HepG2 (cell line): ENCODE measurements at regions of chr22 and their contacts with region 1.

Region 1: DNA sequence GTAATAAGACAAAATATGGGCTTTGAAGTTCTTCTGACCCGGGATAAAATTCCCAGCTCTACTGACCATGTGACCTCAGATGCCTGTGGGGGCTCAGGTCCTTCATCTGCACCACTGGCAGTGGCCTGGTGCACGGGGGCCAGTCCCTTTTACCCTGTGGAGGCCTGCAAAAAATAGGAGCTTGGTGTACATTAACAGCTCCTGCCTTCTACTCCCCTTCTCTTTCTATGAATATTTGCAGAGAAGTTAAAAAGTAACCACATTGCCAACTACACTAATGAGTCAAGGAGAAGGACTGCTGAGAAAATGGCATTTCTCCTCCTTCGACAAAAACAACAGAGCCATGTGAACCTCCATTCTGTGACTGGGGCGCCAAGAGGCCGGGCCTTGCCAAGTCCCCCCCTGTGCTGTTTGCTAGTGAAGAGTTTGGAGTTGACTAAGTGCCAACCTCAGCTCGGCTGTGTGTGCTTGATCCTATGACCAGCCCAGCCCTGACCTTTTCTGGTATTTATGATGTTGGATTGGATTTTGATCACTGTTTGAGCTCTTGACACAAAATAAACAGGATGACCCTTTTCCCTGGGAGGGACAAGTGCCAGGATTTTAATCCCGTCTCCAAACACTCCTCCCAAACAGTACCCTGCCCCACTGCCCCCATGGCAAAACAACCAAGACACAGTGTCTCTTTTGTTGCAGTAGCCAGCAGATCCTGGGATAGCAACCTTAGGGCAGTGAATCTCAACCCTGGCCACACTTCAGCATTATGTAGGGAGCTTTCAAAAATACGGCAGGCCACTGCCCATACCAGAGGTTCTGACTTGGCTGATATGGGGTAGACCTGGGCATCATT is 380.1 kb downstream of the LARGE1 start:
- DNase-seq: peak; percentile 100
- ATAC-seq: peak; percentile 93
- H3K4me3 ChIP-seq: peak overlapping the region in 2 of 3 experiments; percentile 29 to 44; a peak in 2 of 6 replicates
- H3K27ac ChIP-seq: peak overlapping the region; percentile 99
- H3K4me1 ChIP-seq: peaks cover 86% of the 10 kb centered on the region
- H3K27me3 ChIP-seq: no peaks in the 10 kb centered on the region
- CTCF ChIP-seq: peak; percentile 1; the same call in 1 of the 2 replicates
- EP300 ChIP-seq: peak; percentile 97 to 99
- POLR2A ChIP-seq: peak in 1 of 2 experiments; percentile 78; a peak in 2 of 4 replicates
- RAD21 ChIP-seq: 0 out of 2 replicates have a peak, but pooled peaks have one; percentile 26

Region 2: GRCh38 chr22:33332538-33332937 is 207.6 kb before region 1 on chr22:
- CTCF ChIA-PET with region 1: no interaction called
- POLR2A ChIA-PET with region 1: interaction called, 27 read pairs
- in situ Hi-C with region 1: no loop called
- intact Hi-C with region 1: no loop called
- DNase-seq: no peak
- ATAC-seq: peak; percentile 15; the same call in 1 of the 3 replicates
- H3K4me3 ChIP-seq: no peak overlapping the region
- H3K27ac ChIP-seq: peak overlapping the region; percentile 37
- H3K4me1 ChIP-seq: peaks cover 82% of the 10 kb centered on the region
- H3K27me3 ChIP-seq: no peaks in the 10 kb centered on the region
- CTCF ChIP-seq: no peak
- EP300 ChIP-seq: no peak
- POLR2A ChIP-seq: no peak
- RAD21 ChIP-seq: no peak

Region 3: DNA sequence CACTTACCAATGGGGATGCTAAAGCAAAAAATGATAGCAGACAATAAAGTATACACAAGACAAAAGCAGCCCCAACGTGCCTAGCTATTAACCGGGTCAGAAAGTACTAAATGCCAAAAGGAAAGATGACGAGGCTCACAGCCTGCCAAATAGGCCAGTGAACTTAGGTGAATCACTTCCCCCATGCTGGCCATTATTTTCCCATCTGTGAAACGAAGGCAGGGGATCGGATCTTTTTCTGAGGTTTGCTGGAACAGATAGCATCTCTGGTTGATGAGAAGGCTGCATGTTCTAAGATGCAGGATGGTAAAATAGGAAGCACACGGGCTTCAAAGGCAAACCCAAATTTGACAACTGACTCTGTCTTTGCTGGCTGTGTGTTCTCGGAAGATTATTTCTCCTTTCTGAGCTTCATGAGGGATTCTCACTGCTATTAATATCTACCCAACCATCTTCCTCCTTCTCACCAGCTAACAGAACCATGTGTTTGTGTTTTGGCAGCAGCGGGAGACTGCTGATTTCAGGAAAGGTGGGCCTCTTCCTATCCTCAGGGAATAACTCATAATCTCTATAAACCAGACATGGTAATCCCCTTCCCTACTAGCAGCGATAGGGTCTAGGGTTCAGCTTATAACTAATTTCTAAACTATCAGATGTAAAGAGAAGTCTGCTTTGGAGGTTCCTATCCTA is 10.6 kb before region 1 on chr22:
- CTCF ChIA-PET with region 1: no interaction called
- POLR2A ChIA-PET with region 1: interaction called, 28 read pairs
- in situ Hi-C with region 1: no loop called
- intact Hi-C with region 1: no loop called
- DNase-seq: no peak
- ATAC-seq: no peak
- H3K4me3 ChIP-seq: no peak overlapping the region
- H3K27ac ChIP-seq: no peak overlapping the region
- H3K4me1 ChIP-seq: peaks cover 40% of the 10 kb centered on the region
- H3K27me3 ChIP-seq: no peaks in the 10 kb centered on the region
- CTCF ChIP-seq: no peak
- EP300 ChIP-seq: no peak
- POLR2A ChIP-seq: no peak
- RAD21 ChIP-seq: no peak

Region 4: GRCh38 chr22:33565580-33565995 is 25.5 kb after region 1 on chr22:
- CTCF ChIA-PET with region 1: no interaction called
- POLR2A ChIA-PET with region 1: interaction called, 35 read pairs
- in situ Hi-C with region 1: no loop called
- intact Hi-C with region 1: no loop called
- DNase-seq: no peak
- ATAC-seq: no peak
- H3K4me3 ChIP-seq: no peak overlapping the region
- H3K27ac ChIP-seq: no peak overlapping the region
- H3K4me1 ChIP-seq: peaks cover 69% of the 10 kb centered on the region
- H3K27me3 ChIP-seq: no peaks in the 10 kb centered on the region
- CTCF ChIP-seq: no peak
- EP300 ChIP-seq: no peak
- POLR2A ChIP-seq: no peak
- RAD21 ChIP-seq: no peak

Region 5: GRCh38 chr22:33579448-33580093 is 39.4 kb after region 1 on chr22:
- CTCF ChIA-PET with region 1: interaction called, 6 read pairs
- POLR2A ChIA-PET with region 1: interaction called, 91 read pairs
- in situ Hi-C with region 1: loop called (anchors 5 kb)
- intact Hi-C with region 1: loop called (anchors 1 kb)
- DNase-seq: peak; percentile 81
- ATAC-seq: peak; percentile 91
- H3K4me3 ChIP-seq: no peak overlapping the region
- H3K27ac ChIP-seq: peak overlapping the region; percentile 90
- H3K4me1 ChIP-seq: peaks cover 54% of the 10 kb centered on the region
- H3K27me3 ChIP-seq: no peaks in the 10 kb centered on the region
- CTCF ChIP-seq: peak; percentile 97
- EP300 ChIP-seq: no peak
- POLR2A ChIP-seq: no peak
- RAD21 ChIP-seq: peak; percentile 97